CD8-positive, alpha-beta T cell (primary cell): ENCODE measurements at regions of chr7 and their contacts with region 1.

Region 1: GRCh38 chr7:1579481-1580421 is 9.9 kb upstream of the PSMG3 start:
- DNase-seq: peak; percentile 30 to 82 (median 72)
- ATAC-seq: peak; percentile 99
- H3K4me3 ChIP-seq: no peak overlapping the region
- H3K4me3 Mint-ChIP-seq: no peak overlapping the region
- H3K27ac ChIP-seq: no peak overlapping the region
- H3K27ac Mint-ChIP-seq: no peak overlapping the region
- H3K4me1 ChIP-seq: peaks cover 8% of the 10 kb centered on the region
- H3K4me1 Mint-ChIP-seq: peaks cover 11% of the 10 kb centered on the region
- H3K27me3 ChIP-seq: no peaks in the 10 kb centered on the region
- H3K27me3 Mint-ChIP-seq: no peaks in the 10 kb centered on the region
- CTCF ChIP-seq: peak; percentile 81

Region 2: DNA sequence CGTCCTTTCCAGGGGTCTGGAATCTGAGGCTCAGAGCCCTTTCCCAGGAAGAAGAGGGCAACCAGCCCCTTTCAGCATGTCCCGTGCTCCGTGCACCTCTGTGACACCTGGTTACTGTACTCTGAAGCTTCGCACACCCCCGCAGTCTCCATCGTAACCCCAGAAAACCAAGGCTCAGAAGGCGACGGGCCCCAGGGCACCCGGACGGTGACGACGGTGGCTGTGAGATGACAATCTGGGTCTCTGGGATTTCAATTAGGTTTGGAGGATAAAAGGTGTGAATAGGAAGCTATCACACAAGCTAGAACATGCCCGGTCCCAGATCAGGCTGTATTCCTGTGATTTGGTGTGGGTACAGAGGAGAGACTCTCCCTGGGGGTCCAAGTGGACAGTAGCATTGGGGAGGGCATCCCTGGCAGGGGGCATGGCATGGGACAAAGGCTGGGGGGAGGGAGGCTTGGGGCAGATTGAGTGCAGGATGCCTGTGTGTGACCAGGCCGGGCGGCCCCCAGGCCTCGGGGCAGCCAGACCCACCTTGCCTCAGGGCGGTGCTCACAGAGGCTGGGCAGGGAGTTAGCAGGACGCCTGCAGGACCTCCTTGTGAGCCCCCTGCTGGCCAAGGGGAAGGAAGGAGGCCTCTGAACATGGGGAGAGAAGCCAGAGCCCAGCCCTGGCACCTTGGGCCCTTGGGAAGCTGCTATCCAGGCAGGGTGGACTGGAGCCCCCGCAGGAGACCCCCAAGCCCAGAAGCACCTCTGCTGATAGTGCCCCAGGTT is 13.5 kb after region 1 on chr7:
- CTCF ChIA-PET with region 1: interaction called, 4 read pairs
- POLR2A ChIA-PET with region 1: no interaction called
- intact Hi-C with region 1: loop called in 1 of 2 experiments (anchors 1 kb)
- DNase-seq: peak in 2 of 9 experiments; percentile 22 to 29
- ATAC-seq: no peak
- H3K4me3 ChIP-seq: no peak overlapping the region
- H3K4me3 Mint-ChIP-seq: peak overlapping the region; percentile 46
- H3K27ac ChIP-seq: no peak overlapping the region
- H3K27ac Mint-ChIP-seq: no peak overlapping the region
- H3K4me1 ChIP-seq: peaks cover 23% of the 10 kb centered on the region
- H3K4me1 Mint-ChIP-seq: peaks cover 22% of the 10 kb centered on the region
- H3K27me3 ChIP-seq: peaks cover 0 to 20% of the 10 kb centered on the region in 2 experiments
- H3K27me3 Mint-ChIP-seq: peaks cover 27% of the 10 kb centered on the region
- CTCF ChIP-seq: no peak

Region 3: DNA sequence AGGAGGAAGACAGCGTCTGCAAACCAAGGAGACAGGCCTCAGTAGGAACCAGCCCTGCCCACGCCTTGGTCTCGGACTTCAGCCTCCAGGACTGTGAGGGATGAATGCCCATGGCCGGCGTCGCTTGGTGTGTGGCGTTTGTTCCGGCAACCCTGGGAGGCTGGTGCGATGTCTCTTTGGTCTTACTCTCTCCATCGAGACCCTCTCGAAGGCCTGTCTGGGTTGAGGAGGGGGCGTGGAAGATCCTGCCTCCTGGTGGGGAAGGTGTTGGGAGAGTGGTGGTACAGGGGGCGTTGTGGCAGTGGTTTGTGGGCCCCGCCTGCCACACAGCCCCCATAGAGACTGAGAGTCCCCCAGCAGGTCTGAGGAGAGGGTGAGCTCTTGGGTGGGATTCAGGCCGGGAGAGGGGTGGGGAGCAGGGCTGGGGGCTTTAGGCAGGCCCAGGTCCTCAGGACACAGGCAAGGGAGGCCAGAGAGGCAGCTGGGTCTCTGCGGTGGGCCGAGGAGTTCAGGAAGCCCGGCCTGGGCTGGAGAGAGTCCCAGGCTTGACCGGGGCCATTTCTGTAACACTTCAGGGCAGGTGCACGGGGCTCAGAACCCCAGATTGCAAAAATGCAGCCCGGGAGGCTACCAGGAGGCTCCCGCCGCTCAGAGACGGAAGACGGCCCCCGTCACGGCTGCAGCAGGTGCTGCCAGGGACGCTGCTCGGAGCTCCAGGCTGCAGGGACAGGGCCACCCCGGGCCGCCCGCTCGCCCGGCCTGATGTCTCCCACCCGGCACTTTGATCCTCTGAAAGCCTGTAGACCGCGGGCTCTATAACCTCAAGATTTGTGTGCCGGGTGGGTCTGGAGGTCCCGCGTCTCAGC is 23.8 kb after region 1 on chr7:
- CTCF ChIA-PET with region 1: no interaction called
- POLR2A ChIA-PET with region 1: no interaction called
- intact Hi-C with region 1: no loop called
- DNase-seq: no peak
- ATAC-seq: no peak
- H3K4me3 ChIP-seq: no peak overlapping the region
- H3K4me3 Mint-ChIP-seq: no peak overlapping the region
- H3K27ac ChIP-seq: no peak overlapping the region
- H3K27ac Mint-ChIP-seq: no peak overlapping the region
- H3K4me1 ChIP-seq: no peaks in the 10 kb centered on the region
- H3K4me1 Mint-ChIP-seq: no peaks in the 10 kb centered on the region
- H3K27me3 ChIP-seq: no peaks in the 10 kb centered on the region
- H3K27me3 Mint-ChIP-seq: peaks cover 11% of the 10 kb centered on the region
- CTCF ChIP-seq: no peak

Region 4: DNA sequence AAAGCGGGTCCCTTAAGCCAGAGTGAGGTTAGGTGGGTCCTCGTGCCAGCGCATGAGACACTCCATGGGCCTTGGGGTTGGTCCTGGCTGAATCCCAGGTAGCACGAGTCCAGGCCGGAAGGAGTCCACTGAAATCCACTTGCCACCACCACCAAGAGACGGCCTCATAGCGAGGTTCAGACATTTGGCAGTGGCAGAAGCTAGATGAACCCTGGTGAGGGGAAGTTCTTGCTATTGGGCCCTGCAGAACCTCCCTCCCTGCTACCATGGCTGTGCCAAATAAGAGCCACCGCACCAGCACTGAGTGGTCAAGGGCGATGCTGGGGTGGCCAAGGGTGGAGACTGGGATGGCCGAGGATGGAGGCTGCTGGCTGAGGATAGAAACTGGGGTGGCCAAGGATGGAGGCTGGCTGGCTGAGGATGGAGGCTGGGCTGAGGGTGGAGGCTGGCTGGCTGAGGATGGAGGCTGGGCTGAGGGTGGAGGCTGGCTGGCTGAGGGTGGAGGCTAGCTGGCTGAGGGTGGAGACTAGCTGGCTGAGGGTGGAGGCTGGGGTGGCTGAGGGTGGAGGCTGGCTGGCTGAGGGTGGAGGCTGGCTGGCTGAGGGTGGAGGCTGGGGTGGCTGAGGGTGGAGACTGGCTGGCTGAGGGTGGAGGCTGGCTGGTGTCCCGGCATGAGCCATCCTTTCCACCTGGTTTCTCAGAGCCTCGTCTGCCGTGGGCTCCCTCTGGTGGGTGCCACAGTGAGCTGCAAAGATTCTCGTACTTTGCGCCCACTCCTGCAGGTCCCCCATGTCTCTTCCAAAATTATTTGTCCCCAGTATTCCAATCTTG is 178.5 kb after region 1 on chr7:
- CTCF ChIA-PET with region 1: interaction called, 6 read pairs
- POLR2A ChIA-PET with region 1: no interaction called
- intact Hi-C with region 1: loop called (anchors 2 to 5 kb)
- DNase-seq: peak in 3 of 9 experiments; percentile 41 to 57 (median 42)
- ATAC-seq: peak; percentile 62
- H3K4me3 ChIP-seq: no peak overlapping the region
- H3K4me3 Mint-ChIP-seq: no peak overlapping the region
- H3K27ac ChIP-seq: no peak overlapping the region
- H3K27ac Mint-ChIP-seq: no peak overlapping the region
- H3K4me1 ChIP-seq: no peaks in the 10 kb centered on the region
- H3K4me1 Mint-ChIP-seq: peaks cover 8% of the 10 kb centered on the region
- H3K27me3 ChIP-seq: peaks cover 0 to 7% of the 10 kb centered on the region in 2 experiments
- H3K27me3 Mint-ChIP-seq: peaks cover 7% of the 10 kb centered on the region
- CTCF ChIP-seq: no peak

Region 5: GRCh38 chr7:2209146-2209960 is 629.6 kb after region 1 on chr7:
- CTCF ChIA-PET with region 1: interaction called, 7 read pairs
- POLR2A ChIA-PET with region 1: no interaction called
- intact Hi-C with region 1: loop called in 1 of 2 experiments (anchors 1 kb)
- DNase-seq: peak; percentile 14 to 67 (median 46)
- ATAC-seq: peak; percentile 52
- H3K4me3 ChIP-seq: no peak overlapping the region
- H3K4me3 Mint-ChIP-seq: no peak overlapping the region
- H3K27ac ChIP-seq: no peak overlapping the region
- H3K27ac Mint-ChIP-seq: no peak overlapping the region
- H3K4me1 ChIP-seq: no peaks in the 10 kb centered on the region
- H3K4me1 Mint-ChIP-seq: no peaks in the 10 kb centered on the region
- H3K27me3 ChIP-seq: no peaks in the 10 kb centered on the region
- H3K27me3 Mint-ChIP-seq: no peaks in the 10 kb centered on the region
- CTCF ChIP-seq: no peak

Region 6: GRCh38 chr7:2354186-2354938 is 774.6 kb after region 1 on chr7 and contains the start of gene EIF3B:
- CTCF ChIA-PET with region 1: interaction called, 13 read pairs
- POLR2A ChIA-PET with region 1: interaction called, 3 read pairs
- intact Hi-C with region 1: no loop called
- DNase-seq: peak; percentile 80 to 97 (median 90)
- ATAC-seq: peak; percentile 84
- H3K4me3 ChIP-seq: peak within 1 kb of the TSS; percentile 72 to 74
- H3K4me3 Mint-ChIP-seq: peak within 1 kb of the TSS; percentile 88
- H3K27ac ChIP-seq: peak within 1 kb of the TSS; percentile 99
- H3K27ac Mint-ChIP-seq: peak within 1 kb of the TSS; percentile 99
- H3K4me1 ChIP-seq: peaks cover 45% of the 10 kb centered on the region
- H3K4me1 Mint-ChIP-seq: peaks cover 40% of the 10 kb centered on the region
- H3K27me3 ChIP-seq: no peaks in the 10 kb centered on the region
- H3K27me3 Mint-ChIP-seq: no peaks in the 10 kb centered on the region
- CTCF ChIP-seq: no peak
- total RNA-seq, gene EIF3B: 234 to 239 TPM

Region 7: GRCh38 chr7:2431260-2431867 is 851.6 kb after region 1 on chr7:
- CTCF ChIA-PET with region 1: no interaction called
- POLR2A ChIA-PET with region 1: no interaction called
- intact Hi-C with region 1: loop called in 1 of 2 experiments (anchors 1 kb)
- DNase-seq: peak; percentile 16 to 68 (median 47)
- ATAC-seq: peak; percentile 88
- H3K4me3 ChIP-seq: no peak overlapping the region
- H3K4me3 Mint-ChIP-seq: no peak overlapping the region
- H3K27ac ChIP-seq: peak overlapping the region in 1 of 2 experiments; percentile 17
- H3K27ac Mint-ChIP-seq: peak overlapping the region; percentile 0
- H3K4me1 ChIP-seq: no peaks in the 10 kb centered on the region
- H3K4me1 Mint-ChIP-seq: peaks cover 8% of the 10 kb centered on the region
- H3K27me3 ChIP-seq: no peaks in the 10 kb centered on the region
- H3K27me3 Mint-ChIP-seq: no peaks in the 10 kb centered on the region
- CTCF ChIP-seq: peak; percentile 55

Region 8: DNA sequence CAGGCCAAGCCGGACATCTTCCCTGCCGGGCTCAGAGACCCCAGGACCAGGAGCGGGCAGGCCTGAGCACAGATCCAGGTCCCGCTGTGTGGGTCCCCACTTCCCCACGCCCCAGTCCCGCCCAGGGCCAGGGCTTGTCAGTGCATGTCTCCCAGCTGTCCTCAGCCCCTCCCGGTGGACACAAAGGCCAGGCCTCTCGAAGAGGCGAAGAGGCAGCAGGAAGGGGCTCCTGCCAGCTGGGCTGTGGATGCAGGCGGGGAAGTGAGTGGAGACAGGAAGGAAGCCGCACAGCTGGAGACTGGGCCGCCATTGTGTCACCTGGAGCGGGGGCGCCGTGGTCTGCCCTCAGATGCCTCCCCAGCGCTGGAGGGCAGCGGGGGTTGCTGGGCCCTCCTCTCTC is 891.6 kb after region 1 on chr7:
- CTCF ChIA-PET with region 1: interaction called, 3 read pairs
- POLR2A ChIA-PET with region 1: no interaction called
- intact Hi-C with region 1: loop called (anchors 1 to 2 kb)
- DNase-seq: no peak
- ATAC-seq: no peak
- H3K4me3 ChIP-seq: no peak overlapping the region
- H3K4me3 Mint-ChIP-seq: no peak overlapping the region
- H3K27ac ChIP-seq: no peak overlapping the region
- H3K27ac Mint-ChIP-seq: no peak overlapping the region
- H3K4me1 ChIP-seq: peaks cover 5% of the 10 kb centered on the region
- H3K4me1 Mint-ChIP-seq: peaks cover 2% of the 10 kb centered on the region
- H3K27me3 ChIP-seq: no peaks in the 10 kb centered on the region
- H3K27me3 Mint-ChIP-seq: peaks cover 2% of the 10 kb centered on the region
- CTCF ChIP-seq: no peak